ENCODE measurements at regions of chr11 and their contacts with region 1.

Region 1: DNA sequence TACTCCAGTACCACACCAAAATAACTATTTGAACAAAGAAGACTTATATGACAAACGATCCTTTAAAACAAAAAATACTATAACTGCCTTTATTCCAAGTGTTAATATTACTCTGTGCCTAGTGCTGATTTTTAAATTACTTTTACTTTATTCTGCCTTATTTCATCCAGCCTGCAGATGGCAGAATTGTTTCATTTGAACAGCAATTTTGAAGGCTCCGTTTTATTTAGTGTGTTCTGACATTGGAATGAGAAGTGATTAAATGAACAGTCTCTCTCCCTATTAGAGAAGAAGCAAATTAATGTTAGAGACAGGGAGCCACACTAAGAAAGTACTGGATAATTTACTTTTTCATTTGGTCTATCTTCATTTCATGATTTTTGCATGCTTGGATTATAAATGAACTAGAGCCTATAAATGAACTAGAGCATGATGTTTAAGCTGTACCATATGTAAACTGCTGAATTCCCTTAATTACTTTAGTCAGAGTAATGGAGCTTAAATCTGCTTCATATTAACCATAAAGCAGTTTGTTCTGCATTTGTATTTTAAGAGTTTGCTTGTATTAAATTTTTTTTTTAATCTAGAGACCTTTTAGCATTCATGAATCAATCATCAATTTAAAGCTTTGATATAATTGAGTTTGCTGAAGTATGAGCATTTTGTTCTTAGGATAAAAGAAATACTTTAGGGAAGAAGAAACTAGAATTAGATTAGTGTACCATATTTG is 9.8 kb downstream of the PDHX start:
- DNase-seq: peak; percentile 41
- ATAC-seq: peak; percentile 55
- H3K4me3 Mint-ChIP-seq: no peak overlapping the region
- H3K27ac Mint-ChIP-seq: no peak overlapping the region
- H3K4me1 Mint-ChIP-seq: peaks cover 10% of the 10 kb centered on the region
- H3K27me3 Mint-ChIP-seq: no peaks in the 10 kb centered on the region

Region 2: GRCh38 chr11:34798985-34799384 is 127.3 kb before region 1 on chr11:
- CTCF ChIA-PET with region 1: no interaction called
- POLR2A ChIA-PET with region 1: no interaction called
- DNase-seq: no peak
- ATAC-seq: no peak
- H3K4me3 Mint-ChIP-seq: no peak overlapping the region
- H3K27ac Mint-ChIP-seq: no peak overlapping the region
- H3K4me1 Mint-ChIP-seq: no peaks in the 10 kb centered on the region
- H3K27me3 Mint-ChIP-seq: peaks cover 18% of the 10 kb centered on the region

Region 3: GRCh38 chr11:34916015-34916842 is 10.0 kb before region 1 on chr11 and contains the starts of genes APIP and PDHX:
- CTCF ChIA-PET with region 1: interaction called, 25 read pairs
- POLR2A ChIA-PET with region 1: interaction called, 3 read pairs
- DNase-seq: peak; percentile 96
- ATAC-seq: peak; percentile 89
- H3K4me3 Mint-ChIP-seq: peak within 1 kb of the TSS; percentile 91
- H3K27ac Mint-ChIP-seq: peak within 1 kb of the TSS; percentile 94
- H3K4me1 Mint-ChIP-seq: peaks cover 32% of the 10 kb centered on the region
- H3K27me3 Mint-ChIP-seq: no peaks in the 10 kb centered on the region
- total RNA-seq, gene APIP: 31.1 to 34.2 TPM
- total RNA-seq, gene PDHX: 32.3 TPM

Region 4: GRCh38 chr11:34940026-34940677 is 13.9 kb after region 1 on chr11:
- CTCF ChIA-PET with region 1: interaction called, 10 read pairs
- POLR2A ChIA-PET with region 1: no interaction called
- DNase-seq: no peak
- ATAC-seq: no peak
- H3K4me3 Mint-ChIP-seq: no peak overlapping the region
- H3K27ac Mint-ChIP-seq: no peak overlapping the region
- H3K4me1 Mint-ChIP-seq: peaks cover 19% of the 10 kb centered on the region
- H3K27me3 Mint-ChIP-seq: no peaks in the 10 kb centered on the region

Region 5: DNA sequence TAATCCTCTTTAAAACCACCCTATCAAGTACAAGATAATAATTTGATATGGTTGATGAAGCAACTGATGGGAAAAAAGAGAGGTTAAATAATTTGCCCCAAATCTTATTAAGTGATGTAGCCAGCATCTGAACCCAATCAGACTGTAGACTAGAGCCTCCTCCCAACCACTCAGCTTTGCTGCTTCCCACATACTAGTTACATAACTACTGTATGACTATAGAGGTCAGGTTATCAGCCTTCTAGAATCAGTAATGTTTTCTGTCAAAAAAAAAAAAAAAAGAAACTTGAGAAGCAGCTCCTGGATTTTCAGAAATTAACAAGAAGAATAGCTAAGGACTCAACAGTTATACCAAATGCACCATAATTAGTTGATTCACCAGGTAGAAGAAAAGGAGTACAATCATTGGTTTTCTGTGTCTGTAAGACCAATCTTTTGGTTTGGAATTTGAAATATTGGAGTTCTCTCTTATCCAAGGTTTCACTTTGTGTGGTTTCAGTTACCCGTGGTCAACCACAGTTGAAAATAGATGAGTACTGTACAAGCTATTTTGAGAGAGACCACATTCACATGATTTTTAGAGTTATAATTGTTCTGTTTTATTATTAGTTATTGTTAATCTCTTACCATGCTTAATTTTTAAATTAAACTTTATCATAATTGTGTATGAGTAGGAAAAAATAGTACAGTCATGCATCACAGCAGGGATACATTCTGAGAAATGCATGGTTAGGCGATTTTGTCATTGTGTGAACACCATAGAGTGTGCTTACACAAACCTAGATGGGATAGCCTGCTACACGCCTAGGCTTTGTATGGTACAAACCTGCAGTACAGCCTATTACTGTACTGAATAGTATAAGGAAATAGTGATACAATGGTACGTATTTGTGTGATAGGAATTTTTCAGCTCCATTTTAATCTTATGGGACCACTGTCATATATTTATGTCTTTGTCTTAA is 62.3 kb after region 1 on chr11:
- CTCF ChIA-PET with region 1: interaction called, 10 read pairs
- POLR2A ChIA-PET with region 1: no interaction called
- DNase-seq: no peak
- ATAC-seq: no peak
- H3K4me3 Mint-ChIP-seq: no peak overlapping the region
- H3K27ac Mint-ChIP-seq: no peak overlapping the region
- H3K4me1 Mint-ChIP-seq: peaks cover 12% of the 10 kb centered on the region
- H3K27me3 Mint-ChIP-seq: no peaks in the 10 kb centered on the region

Region 6: DNA sequence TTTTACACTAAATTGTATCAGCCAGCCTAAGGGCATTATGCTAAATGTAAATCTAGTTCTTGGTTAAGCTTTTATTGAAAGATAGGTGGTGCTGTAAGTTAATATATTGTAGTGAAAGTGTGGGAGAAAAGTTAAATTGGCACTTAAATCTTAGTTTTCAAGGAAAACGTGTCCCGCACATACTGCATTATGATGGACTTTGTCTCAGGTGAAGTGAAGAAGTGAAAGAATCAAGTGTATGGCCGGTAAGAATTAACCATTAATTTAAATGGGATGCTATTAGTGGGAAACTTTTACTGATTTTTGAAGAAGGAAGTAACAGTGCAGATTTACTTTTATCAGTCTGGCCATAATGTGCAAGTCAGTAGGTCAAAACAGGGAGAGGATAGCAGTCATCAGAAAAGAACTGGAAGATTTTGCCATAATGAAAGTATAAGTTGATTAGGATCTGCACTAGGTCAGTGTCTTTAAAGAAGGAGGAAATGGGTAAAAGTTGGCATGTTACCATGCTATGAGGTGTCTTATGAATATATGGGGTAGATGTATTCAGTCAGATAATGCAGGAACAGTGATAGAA is 71.8 kb after region 1 on chr11:
- CTCF ChIA-PET with region 1: interaction called, 14 read pairs
- POLR2A ChIA-PET with region 1: no interaction called
- DNase-seq: no peak
- ATAC-seq: peak; percentile 69
- H3K4me3 Mint-ChIP-seq: no peak overlapping the region
- H3K27ac Mint-ChIP-seq: no peak overlapping the region
- H3K4me1 Mint-ChIP-seq: peaks cover 24% of the 10 kb centered on the region
- H3K27me3 Mint-ChIP-seq: no peaks in the 10 kb centered on the region

Region 7: DNA sequence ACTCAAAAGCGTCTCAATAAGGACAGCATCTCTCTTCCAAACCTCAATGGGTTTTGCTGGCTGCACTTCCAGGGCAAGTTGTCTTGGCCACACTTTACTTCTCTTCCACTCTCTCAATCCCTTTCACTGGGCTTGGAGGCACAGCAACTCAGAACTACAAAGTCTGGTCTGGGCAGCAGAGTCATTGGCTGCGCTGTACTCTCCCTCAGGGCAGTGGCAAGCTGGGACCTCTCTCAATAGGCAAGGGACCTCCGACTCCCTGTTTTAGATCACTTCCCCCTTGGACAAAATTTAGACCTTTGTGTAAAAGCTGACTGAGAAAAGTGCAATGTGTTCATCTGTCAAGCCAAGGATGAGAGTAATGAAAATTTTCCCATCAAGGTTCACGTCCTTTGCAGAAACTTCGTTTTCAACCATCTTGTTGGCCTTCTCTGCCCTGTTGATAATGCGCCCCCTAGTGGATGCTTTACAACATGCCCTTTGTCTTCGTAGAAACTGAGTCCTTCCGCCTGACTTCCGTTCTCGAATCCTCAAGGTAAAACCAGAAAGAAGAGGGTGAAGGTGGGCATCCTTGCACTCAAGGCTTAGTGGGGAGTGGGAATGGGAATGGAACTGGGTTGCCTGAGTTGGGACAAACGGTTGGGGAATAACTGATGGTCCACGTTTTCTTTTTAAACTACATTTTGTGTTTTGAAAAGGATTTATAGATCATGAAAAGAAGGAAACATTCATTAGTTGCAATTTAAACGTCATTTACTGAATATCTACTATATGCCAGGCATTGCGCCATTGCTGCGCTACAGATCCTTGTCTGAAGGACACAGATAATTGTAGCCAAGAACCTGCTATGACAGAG is 311.8 kb after region 1 on chr11:
- CTCF ChIA-PET with region 1: interaction called, 19 read pairs
- POLR2A ChIA-PET with region 1: no interaction called
- DNase-seq: peak; percentile 73
- ATAC-seq: no peak
- H3K4me3 Mint-ChIP-seq: no peak overlapping the region
- H3K27ac Mint-ChIP-seq: no peak overlapping the region
- H3K4me1 Mint-ChIP-seq: peaks cover 87% of the 10 kb centered on the region
- H3K27me3 Mint-ChIP-seq: peaks cover 2% of the 10 kb centered on the region

Region 8: GRCh38 chr11:35391922-35392813 is 465.9 kb after region 1 on chr11:
- CTCF ChIA-PET with region 1: interaction called, 150 read pairs
- POLR2A ChIA-PET with region 1: no interaction called
- DNase-seq: peak; percentile 84
- ATAC-seq: peak; percentile 80
- H3K4me3 Mint-ChIP-seq: no peak overlapping the region
- H3K27ac Mint-ChIP-seq: no peak overlapping the region
- H3K4me1 Mint-ChIP-seq: peaks cover 15% of the 10 kb centered on the region
- H3K27me3 Mint-ChIP-seq: peaks cover 4% of the 10 kb centered on the region